ENCODE measurements at regions of chr9 and their contacts with region 1.

Region 1: DNA sequence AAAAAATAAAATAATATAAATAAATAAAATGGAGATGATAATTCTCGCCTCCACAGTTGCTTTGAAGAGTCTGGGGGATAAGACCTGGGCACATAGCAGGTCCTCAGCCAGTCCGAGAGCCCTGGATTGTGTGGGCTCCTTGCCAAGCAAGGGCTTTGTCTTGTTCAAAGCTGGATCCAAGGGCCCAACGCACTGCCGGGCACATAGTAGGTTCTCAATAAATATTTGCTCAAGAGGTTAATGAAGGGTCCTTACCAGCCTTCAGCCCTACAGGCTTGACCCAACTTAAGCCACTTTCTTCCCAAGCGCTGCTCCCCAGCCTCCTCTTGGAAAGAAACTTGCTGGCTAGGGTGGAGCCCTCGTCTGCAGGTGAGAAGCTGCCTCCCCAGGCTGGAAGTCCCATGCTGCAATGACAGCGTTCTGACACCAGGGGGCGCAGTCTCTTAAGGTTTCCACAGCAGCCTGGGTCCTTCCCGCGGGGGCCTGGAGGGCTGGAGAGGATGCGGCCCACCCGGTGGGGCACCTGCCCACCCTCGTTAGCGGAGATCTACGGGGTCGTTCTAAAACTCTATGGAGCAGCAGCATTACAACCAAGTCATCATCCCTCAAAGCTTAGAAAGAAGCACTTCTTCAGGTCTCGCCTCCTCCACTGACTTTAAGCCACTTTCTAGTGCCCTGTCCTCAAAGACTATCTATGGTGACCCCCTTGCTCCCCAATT is 115.2 kb downstream of the LHX2 start:
- DNase-seq: no peak
- H3K4me3 ChIP-seq: no peak overlapping the region
- CTCF ChIP-seq: peak; percentile 99

Region 2: DNA sequence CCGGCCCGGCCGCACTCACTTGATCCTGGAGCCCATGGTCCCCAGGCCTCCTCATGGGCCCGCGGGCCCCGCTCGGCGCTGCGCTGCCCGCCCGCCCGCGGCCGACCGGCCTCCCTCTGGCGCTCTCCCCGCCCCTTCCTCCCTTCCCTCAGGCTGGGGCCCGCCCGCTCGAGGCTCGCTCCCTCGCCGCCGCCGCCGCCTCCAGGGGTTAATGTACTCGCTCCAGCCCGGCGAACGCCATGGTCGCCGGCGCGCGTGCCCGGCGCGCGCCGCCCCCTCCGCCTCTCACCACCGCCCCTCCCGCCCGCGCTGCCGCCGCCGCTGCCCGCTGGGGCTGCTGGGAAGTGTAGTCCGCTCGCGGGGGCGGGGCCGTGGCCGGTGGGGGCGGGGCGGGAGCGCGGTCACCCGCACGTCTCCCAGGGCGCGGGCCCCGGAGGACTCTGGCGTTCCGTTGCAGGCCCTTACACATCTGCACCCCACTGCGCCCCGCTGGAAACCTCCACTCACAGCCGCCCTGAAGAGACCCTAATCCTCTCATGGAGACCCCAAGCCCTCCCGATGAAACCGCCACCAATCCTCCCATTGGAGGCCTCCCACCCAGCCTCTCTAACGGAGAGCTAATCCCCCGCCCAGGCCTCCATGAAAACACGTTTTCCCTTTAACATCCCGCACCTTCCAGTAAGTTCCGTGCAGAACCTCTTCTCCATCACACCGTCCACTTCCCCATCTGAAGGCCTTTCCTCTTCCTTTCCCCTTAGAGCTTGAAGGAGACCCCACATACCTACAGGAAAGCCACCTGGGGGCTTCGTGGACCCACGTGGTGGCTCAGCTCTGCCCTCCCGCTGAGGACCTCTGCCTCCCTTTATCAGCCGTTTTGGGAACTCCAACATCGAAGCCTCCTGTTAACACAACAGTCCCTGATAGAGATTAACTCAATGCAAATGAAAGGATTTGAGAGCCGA is 196.6 kb before region 1 on chr9 and contains the start of gene DENND1A:
- CTCF ChIA-PET with region 1: no interaction called
- POLR2A ChIA-PET with region 1: no interaction called
- DNase-seq: no peak
- H3K4me3 ChIP-seq: peak within 1 kb of the TSS; percentile 70
- CTCF ChIP-seq: no peak

Region 3: GRCh38 chr9:124110307-124110915 is 16.3 kb before region 1 on chr9:
- CTCF ChIA-PET with region 1: interaction called, 12 read pairs
- POLR2A ChIA-PET with region 1: no interaction called
- DNase-seq: no peak
- H3K4me3 ChIP-seq: no peak overlapping the region
- CTCF ChIP-seq: no peak

Region 4: DNA sequence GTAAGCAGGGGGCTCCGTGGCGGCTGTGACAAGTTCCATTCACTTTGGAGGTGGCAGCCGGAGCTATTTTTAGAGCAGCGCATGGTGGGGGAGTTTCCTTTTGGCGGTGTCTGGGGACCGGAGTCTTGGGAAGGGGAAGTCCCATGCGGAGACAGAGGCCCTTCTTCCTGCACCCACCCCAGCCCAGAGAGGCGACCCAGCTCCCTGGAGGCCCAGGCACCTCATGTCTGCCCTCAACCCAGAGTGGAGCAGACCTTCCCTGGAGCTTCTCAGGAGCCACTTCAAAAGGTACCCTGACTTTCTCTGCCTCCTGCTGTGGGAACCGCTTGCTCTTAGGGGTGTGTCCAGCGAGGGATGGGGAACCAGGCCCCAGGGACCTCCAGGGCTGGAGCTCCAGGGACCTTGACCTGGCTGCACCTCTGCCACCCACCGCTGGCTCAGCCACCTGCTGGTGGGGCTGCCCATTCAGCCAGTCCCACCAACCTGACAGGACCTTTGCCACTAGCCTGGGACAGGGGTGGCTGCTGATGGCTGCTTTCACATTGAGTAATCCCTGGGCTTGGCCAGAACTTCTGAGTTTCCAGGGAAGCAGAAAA is 165.2 kb after region 1 on chr9:
- CTCF ChIA-PET with region 1: interaction called, 14 read pairs
- POLR2A ChIA-PET with region 1: no interaction called
- DNase-seq: no peak
- H3K4me3 ChIP-seq: no peak overlapping the region
- CTCF ChIP-seq: no peak

Region 5: GRCh38 chr9:124320062-124320973 is 193.6 kb after region 1 on chr9:
- CTCF ChIA-PET with region 1: interaction called, 74 read pairs
- POLR2A ChIA-PET with region 1: no interaction called
- DNase-seq: no peak
- H3K4me3 ChIP-seq: no peak overlapping the region
- CTCF ChIP-seq: peak; percentile 92

Region 6: DNA sequence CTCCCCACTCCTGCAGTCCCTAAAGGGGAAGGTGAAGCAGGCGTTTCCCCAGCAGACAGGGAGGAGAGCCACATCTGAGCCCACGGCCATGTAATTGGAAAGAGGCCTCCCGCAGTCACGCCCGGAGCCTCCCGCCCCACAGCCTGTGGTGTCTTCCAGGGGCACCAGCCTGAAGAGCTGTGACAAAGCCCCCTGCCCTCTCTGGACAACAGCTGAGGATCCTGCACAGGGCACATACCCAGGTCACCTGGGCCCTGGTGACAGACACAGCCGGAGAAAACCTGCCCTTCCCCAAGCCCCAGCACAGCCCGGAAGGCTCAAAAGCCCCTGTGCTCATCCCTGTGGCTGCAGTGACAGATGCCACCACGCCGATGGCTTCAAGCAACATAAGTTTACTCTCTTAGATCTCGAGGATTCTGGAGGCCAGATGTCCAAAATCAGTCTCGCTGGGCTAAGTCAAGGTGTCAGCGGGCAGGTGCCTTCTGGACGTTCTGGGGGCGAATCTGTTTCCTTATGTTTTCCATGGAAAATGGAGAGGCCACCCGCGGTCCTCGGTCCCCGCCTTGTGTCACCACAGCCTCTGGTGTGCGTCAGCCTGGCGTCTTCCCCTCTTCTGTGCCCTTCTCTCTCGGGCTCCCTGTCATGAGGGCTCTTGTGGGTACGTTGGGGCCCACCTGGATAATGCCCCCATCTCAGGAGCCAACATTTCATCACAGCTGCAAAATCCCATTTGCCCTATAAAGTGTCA is 217.0 kb after region 1 on chr9:
- CTCF ChIA-PET with region 1: interaction called, 20 read pairs
- POLR2A ChIA-PET with region 1: no interaction called
- DNase-seq: no peak
- H3K4me3 ChIP-seq: peak overlapping the region; percentile 8; the same call in 1 of the 2 replicates
- CTCF ChIP-seq: no peak

Region 7: GRCh38 chr9:124363326-124364096 is 236.8 kb after region 1 on chr9:
- CTCF ChIA-PET with region 1: interaction called, 10 read pairs
- POLR2A ChIA-PET with region 1: no interaction called
- DNase-seq: no peak
- H3K4me3 ChIP-seq: no peak overlapping the region
- CTCF ChIP-seq: no peak

Region 8: GRCh38 chr9:124537926-124538325 is 411.2 kb after region 1 on chr9:
- CTCF ChIA-PET with region 1: interaction called, 10 read pairs
- POLR2A ChIA-PET with region 1: no interaction called
- DNase-seq: no peak
- H3K4me3 ChIP-seq: no peak overlapping the region
- CTCF ChIP-seq: no peak